B cell (primary cell): ENCODE measurements at regions of chr7 and their contacts with region 1.

Region 1: DNA sequence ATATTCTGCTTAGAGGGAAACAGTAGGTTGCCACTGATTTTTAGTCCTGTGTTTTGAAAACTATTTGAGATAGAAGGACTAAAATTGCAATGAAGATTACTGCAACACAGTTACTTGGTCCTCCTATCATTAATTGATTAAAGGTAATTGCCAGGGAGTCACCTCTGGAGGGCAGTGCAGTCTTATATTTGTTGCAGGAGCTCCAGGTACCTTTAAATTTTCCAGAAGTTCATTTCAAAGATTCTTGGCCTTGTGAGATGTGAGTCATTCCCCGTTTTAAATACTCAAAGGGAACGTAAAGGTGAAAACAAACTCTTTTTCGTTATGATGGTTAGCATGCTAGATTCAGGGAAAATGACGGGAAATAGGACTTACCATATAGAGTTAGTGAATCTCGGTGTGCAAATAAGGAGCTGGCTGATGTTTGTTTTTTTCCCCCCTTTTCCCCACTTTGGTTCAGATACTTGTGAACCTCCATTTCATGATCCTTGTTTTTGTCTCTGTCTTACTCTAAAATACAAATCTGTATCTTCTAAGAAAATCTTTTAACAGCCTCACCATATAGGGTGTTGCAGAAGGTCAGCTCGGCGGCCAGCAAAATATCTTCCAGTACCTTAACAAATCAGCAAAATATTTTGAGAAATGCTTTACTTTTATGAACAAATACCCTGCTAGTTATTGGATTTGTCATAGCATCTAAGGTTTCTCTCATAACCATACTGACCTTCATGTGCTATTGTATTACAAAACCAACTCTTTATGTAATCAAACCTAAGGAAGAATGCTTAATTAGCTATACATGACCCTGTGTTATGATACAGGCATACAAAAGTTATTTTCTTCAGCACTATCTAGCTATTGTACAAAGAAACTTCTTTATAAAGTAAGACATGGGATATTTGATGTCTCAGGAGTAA is 143.0 kb upstream of the HDAC9 start:
- DNase-seq: peak; percentile 70
- ATAC-seq: peak; percentile 52
- H3K4me3 ChIP-seq: no peak overlapping the region
- H3K4me3 Mint-ChIP-seq: no peak overlapping the region
- H3K27ac ChIP-seq: no peak overlapping the region
- H3K27ac Mint-ChIP-seq: no peak overlapping the region
- H3K4me1 ChIP-seq: peaks cover 11 to 12% of the 10 kb centered on the region in 2 donors
- H3K4me1 Mint-ChIP-seq: peaks cover 25% of the 10 kb centered on the region
- H3K27me3 ChIP-seq: no peaks in the 10 kb centered on the region
- H3K27me3 Mint-ChIP-seq: no peaks in the 10 kb centered on the region
- CTCF ChIP-seq: peak; percentile 80

Region 2: GRCh38 chr7:18302097-18302496 is 50.5 kb before region 1 on chr7:
- CTCF ChIA-PET with region 1: no interaction called
- POLR2A ChIA-PET with region 1: no interaction called
- intact Hi-C with region 1: no loop called
- DNase-seq: no peak
- ATAC-seq: no peak
- H3K4me3 ChIP-seq: no peak overlapping the region
- H3K4me3 Mint-ChIP-seq: no peak overlapping the region
- H3K27ac ChIP-seq: no peak overlapping the region
- H3K27ac Mint-ChIP-seq: no peak overlapping the region
- H3K4me1 ChIP-seq: peaks cover 26 to 39% of the 10 kb centered on the region in 2 donors
- H3K4me1 Mint-ChIP-seq: peaks cover 58% of the 10 kb centered on the region
- H3K27me3 ChIP-seq: no peaks in the 10 kb centered on the region
- H3K27me3 Mint-ChIP-seq: no peaks in the 10 kb centered on the region
- CTCF ChIP-seq: no peak

Region 3: DNA sequence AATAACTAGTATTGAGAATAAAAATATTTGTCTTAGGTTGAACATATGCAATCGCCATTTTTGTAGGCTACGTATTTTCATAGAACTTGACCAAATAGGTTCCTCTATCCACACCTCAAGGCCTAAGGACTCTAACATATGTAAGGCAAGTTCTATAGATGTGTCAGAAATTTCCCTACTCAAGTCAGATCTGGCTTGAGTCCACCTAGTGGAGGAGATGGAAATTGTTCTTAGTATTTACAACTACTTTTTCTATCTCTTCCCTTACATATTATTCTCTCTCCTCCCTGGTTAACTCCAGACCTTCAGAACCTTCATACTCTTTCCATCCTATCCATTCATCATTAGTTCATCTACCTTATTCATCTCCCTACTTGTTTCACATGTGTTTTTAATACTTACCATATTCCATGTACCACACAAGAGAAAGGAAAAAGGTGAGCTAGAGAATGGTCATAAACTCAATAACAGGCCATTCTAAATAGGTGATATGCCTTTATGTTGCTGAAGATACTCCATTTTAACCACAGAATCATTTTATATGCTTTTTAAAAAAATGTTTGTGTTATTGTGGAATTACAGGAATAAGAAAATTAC is 31.5 kb before region 1 on chr7:
- CTCF ChIA-PET with region 1: interaction called, 10 read pairs
- POLR2A ChIA-PET with region 1: interaction called, 3 read pairs
- intact Hi-C with region 1: no loop called
- DNase-seq: peak; percentile 63
- ATAC-seq: peak; percentile 81
- H3K4me3 ChIP-seq: no peak overlapping the region
- H3K4me3 Mint-ChIP-seq: no peak overlapping the region
- H3K27ac ChIP-seq: no peak overlapping the region
- H3K27ac Mint-ChIP-seq: no peak overlapping the region
- H3K4me1 ChIP-seq: peaks cover 4 to 20% of the 10 kb centered on the region in 2 donors
- H3K4me1 Mint-ChIP-seq: peaks cover 39% of the 10 kb centered on the region
- H3K27me3 ChIP-seq: no peaks in the 10 kb centered on the region
- H3K27me3 Mint-ChIP-seq: no peaks in the 10 kb centered on the region
- CTCF ChIP-seq: peak; percentile 81

Region 4: DNA sequence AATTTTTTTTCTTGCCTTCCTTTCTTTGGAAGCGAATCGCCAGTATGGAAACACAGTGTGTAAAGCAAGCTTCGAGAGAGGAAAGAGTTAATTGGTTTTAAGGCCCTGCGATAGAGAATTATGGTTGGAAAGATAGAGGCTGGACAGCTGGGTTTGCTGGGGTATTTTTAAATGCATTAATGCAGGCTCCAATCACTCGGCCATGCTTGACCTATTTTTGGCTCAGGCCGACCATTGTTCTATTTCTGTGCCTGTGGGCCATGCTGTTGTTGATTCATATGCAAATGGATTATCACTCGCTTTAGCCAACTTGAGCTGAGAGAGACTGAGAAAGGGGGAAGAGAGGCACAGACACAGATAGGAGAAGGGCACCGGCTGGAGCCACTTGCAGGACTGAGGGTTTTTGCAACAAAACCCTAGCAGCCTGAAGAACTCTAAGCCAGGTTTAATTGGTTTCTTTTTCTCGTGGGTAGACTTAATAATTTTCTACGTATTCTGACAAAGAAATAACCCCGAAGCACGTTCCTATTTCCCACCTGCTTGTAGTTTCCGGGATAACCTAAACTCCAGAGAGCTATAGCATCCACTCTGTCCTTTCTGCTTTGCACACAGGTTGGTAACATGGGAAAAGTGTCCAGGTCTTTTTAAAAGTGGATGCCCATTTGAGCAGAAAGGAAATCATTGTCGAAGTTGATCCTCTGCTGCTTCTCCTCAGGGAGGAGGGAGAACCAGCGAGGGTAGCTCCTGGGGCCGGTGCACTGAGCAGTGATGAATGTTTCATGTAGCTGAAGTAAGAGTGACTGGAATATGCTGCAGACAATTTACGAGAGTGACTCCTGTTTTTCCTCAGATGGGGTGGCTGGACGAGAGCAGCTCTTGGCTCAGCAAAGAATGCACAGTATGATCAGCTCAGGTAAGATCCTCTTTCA is 143.1 kb after region 1 on chr7 and contains the start of gene HDAC9:
- CTCF ChIA-PET with region 1: interaction called, 10 read pairs
- POLR2A ChIA-PET with region 1: no interaction called
- intact Hi-C with region 1: loop called (anchors 2 kb)
- DNase-seq: peak; percentile 77
- ATAC-seq: peak; percentile 90
- H3K4me3 ChIP-seq: peak within 1 kb of the TSS; percentile 52 to 87 (median 75)
- H3K4me3 Mint-ChIP-seq: peak within 1 kb of the TSS; percentile 80
- H3K27ac ChIP-seq: peak within 1 kb of the TSS; percentile 65 to 80
- H3K27ac Mint-ChIP-seq: peak within 1 kb of the TSS; percentile 82
- H3K4me1 ChIP-seq: peaks cover 25 to 50% of the 10 kb centered on the region in 2 donors
- H3K4me1 Mint-ChIP-seq: peaks cover 57% of the 10 kb centered on the region
- H3K27me3 ChIP-seq: no peaks in the 10 kb centered on the region
- H3K27me3 Mint-ChIP-seq: no peaks in the 10 kb centered on the region
- CTCF ChIP-seq: no peak
- total RNA-seq, gene HDAC9: 64.8 and 67.7 TPM in 2 replicates

Region 5: GRCh38 chr7:18610331-18610948 is 257.8 kb after region 1 on chr7:
- CTCF ChIA-PET with region 1: interaction called, 65 read pairs
- POLR2A ChIA-PET with region 1: no interaction called
- intact Hi-C with region 1: loop called (anchors 1 kb)
- DNase-seq: peak; percentile 44
- ATAC-seq: peak; percentile 31
- H3K4me3 ChIP-seq: no peak overlapping the region
- H3K4me3 Mint-ChIP-seq: no peak overlapping the region
- H3K27ac ChIP-seq: no peak overlapping the region
- H3K27ac Mint-ChIP-seq: peak overlapping the region; percentile 32
- H3K4me1 ChIP-seq: no peaks in the 10 kb centered on the region
- H3K4me1 Mint-ChIP-seq: peaks cover 7% of the 10 kb centered on the region
- H3K27me3 ChIP-seq: no peaks in the 10 kb centered on the region
- H3K27me3 Mint-ChIP-seq: no peaks in the 10 kb centered on the region
- CTCF ChIP-seq: peak; percentile 74

Region 6: DNA sequence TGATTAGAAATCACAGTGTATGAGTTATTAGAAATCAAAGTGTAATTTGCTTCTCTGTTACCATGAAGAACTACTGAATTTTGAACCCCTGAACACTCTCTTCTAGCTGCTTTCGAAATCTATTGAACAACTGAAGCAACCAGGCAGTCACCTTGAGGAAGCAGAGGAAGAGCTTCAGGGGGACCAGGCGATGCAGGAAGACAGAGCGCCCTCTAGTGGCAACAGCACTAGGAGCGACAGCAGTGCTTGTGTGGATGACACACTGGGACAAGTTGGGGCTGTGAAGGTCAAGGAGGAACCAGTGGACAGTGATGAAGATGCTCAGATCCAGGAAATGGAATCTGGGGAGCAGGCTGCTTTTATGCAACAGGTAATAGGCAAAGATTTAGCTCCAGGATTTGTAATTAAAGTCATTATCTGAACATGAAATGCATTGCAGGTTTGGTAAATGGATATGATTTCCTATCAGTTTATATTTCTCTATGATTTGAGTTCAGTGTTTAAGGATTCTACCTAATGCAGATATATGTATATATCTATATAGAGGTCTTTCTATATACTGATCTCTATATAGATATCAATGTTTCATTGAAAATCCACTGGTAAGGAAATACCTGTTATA is 313.6 kb after region 1 on chr7:
- CTCF ChIA-PET with region 1: interaction called, 295 read pairs
- POLR2A ChIA-PET with region 1: no interaction called
- intact Hi-C with region 1: loop called (anchors 1 kb)
- DNase-seq: peak; percentile 85
- ATAC-seq: peak; percentile 98
- H3K4me3 ChIP-seq: no peak overlapping the region
- H3K4me3 Mint-ChIP-seq: no peak overlapping the region
- H3K27ac ChIP-seq: peak overlapping the region in 1 of 2 donors; percentile 54
- H3K27ac Mint-ChIP-seq: peak overlapping the region; percentile 2
- H3K4me1 ChIP-seq: peaks cover 0 to 17% of the 10 kb centered on the region in 2 donors
- H3K4me1 Mint-ChIP-seq: peaks cover 10% of the 10 kb centered on the region
- H3K27me3 ChIP-seq: no peaks in the 10 kb centered on the region
- H3K27me3 Mint-ChIP-seq: no peaks in the 10 kb centered on the region
- CTCF ChIP-seq: peak; percentile 99